Naive thymus-derived CD4-positive, alpha-beta T cell (primary cell): ENCODE measurements at regions of chr9 and their contacts with region 1.

Region 1: DNA sequence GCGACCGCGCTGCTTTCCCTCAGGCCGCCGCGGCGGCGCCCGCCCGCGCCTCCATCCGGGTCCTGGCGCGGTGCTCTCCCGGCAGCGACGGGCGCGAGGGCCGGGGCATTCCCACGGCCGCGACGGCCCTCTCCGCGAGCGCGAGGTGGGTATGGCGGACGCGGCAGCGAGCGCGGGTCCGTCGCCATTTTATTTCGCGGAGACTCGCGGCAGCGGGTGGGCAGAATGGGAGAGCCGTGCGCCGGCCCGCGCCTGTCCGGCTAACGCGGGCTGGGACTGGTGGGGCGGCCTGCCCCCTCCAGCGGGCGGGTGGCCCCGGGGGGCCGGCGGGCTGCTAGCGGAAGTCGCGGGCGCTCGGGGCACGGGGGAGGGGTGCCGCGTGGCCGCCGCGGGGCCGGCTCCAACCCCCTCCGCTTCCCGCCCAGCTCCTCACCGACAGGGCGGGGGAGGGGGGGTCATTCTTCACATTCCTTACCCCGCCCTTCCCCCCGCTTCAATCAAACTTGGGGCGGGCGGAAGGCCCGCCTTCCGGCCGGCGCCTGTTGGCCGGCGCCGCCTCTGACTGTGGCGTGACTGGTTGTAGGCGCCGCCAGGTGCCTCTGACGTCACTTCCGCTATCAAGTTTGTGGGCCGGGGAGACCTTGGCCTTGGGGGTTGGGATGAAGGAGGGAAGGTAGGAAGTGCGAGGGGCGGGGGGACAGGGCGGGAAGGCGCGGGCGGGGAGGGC is 82.1 kb downstream of the PTPDC1 start:
- DNase-seq: peak; percentile 81 to 96 (median 92)
- ATAC-seq: peak; percentile 72
- H3K4me3 ChIP-seq: peak overlapping the region; percentile 82
- H3K4me3 Mint-ChIP-seq: peak overlapping the region; percentile 84 to 96 (median 88)
- H3K27ac ChIP-seq: peak overlapping the region; percentile 100
- H3K27ac Mint-ChIP-seq: peak overlapping the region; percentile 79 to 97 (median 91)
- H3K4me1 ChIP-seq: peaks cover 37 to 38% of the 10 kb centered on the region in 2 donors
- H3K4me1 Mint-ChIP-seq: peaks cover 33 to 61% (median 58%) of the 10 kb centered on the region in 7 donors
- H3K27me3 ChIP-seq: no peaks in the 10 kb centered on the region
- H3K27me3 Mint-ChIP-seq: no peaks in the 10 kb centered on the region

Region 2: DNA sequence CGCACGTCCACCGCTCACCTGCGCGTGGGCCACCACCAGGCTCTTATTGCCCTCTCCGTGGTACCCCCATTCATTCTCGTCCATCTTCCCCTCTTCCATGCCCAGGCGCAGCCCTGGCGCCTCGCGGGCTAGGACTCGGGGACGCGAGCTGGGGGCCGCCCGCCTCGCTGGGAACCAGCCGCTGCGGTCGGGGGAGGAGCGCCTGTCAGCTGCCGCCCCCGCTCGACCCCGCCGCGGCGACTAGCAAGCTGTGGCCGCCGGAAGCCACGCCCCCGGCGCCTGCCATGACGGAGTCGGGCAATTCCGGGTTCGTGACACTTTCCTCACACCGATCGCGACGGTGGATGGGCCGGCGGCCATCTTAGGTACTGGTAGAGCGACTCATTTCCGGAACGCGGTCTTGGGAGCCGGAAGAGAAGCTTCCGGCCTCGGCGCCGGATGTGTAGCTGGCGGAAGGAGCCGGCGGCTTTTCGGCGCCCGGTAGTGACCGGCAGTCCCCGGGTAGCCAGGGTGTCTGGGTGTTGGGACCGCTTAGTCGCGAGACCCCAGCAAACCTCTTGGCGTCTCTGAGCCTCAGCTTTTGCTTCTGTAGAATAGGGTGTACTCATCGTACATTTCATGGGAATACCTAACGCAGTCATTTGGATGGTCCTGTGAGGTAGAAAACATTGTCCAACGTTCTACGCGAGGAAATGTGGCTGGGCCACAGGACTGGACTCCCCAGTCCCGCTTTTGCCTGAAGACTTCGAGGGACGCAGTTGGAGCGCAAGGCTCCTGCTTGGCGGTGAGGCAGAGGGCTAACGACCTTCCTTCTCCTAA is 1496.3 kb before region 1 on chr9 and contains the start of gene IPPK:
- CTCF ChIA-PET with region 1: no interaction called
- POLR2A ChIA-PET with region 1: no interaction called
- intact Hi-C with region 1: loop called (anchors 1 to 10 kb)
- DNase-seq: peak; percentile 92 to 99 (median 96)
- ATAC-seq: peak; percentile 98
- H3K4me3 ChIP-seq: peak within 1 kb of the TSS; percentile 100
- H3K4me3 Mint-ChIP-seq: peak within 1 kb of the TSS; percentile 83 to 98 (median 95)
- H3K27ac ChIP-seq: peak within 1 kb of the TSS; percentile 91
- H3K27ac Mint-ChIP-seq: peak within 1 kb of the TSS; percentile 90 to 98 (median 95)
- H3K4me1 ChIP-seq: peaks cover 16 to 23% of the 10 kb centered on the region in 2 donors
- H3K4me1 Mint-ChIP-seq: peaks cover 27 to 46% (median 36%) of the 10 kb centered on the region in 7 donors
- H3K27me3 ChIP-seq: no peaks in the 10 kb centered on the region
- H3K27me3 Mint-ChIP-seq: no peaks in the 10 kb centered on the region
- total RNA-seq, gene IPPK: 5.9 to 12.8 (median 7.4) TPM

Region 3: GRCh38 chr9:94030318-94031179 is 135.9 kb before region 1 on chr9:
- CTCF ChIA-PET with region 1: no interaction called
- POLR2A ChIA-PET with region 1: no interaction called
- intact Hi-C with region 1: loop called (anchors 1 kb)
- DNase-seq: peak; percentile 65 to 86 (median 75)
- ATAC-seq: peak; percentile 100
- H3K4me3 ChIP-seq: peak overlapping the region; percentile 89
- H3K4me3 Mint-ChIP-seq: peak overlapping the region; percentile 93 to 100 (median 98)
- H3K27ac ChIP-seq: peak overlapping the region; percentile 79
- H3K27ac Mint-ChIP-seq: peak overlapping the region; percentile 81 to 99 (median 94)
- H3K4me1 ChIP-seq: peaks cover 0 to 10% of the 10 kb centered on the region in 2 donors
- H3K4me1 Mint-ChIP-seq: peaks cover 10 to 44% (median 38%) of the 10 kb centered on the region in 7 donors
- H3K27me3 ChIP-seq: peaks cover 0 to 6% of the 10 kb centered on the region in 2 donors
- H3K27me3 Mint-ChIP-seq: peaks cover 0 to 15% (median 6%) of the 10 kb centered on the region in 5 donors

Region 4: GRCh38 chr9:94181408-94182181 is 15.2 kb after region 1 on chr9:
- CTCF ChIA-PET with region 1: no interaction called
- POLR2A ChIA-PET with region 1: interaction called, 3 read pairs
- intact Hi-C with region 1: loop called in 1 of 2 experiments (anchors 2 kb)
- DNase-seq: no peak
- ATAC-seq: peak; percentile 14
- H3K4me3 ChIP-seq: no peak overlapping the region
- H3K4me3 Mint-ChIP-seq: no peak overlapping the region
- H3K27ac ChIP-seq: no peak overlapping the region
- H3K27ac Mint-ChIP-seq: peak overlapping the region in 7 of 9 donors; percentile 36 to 86 (median 58)
- H3K4me1 ChIP-seq: no peaks in the 10 kb centered on the region
- H3K4me1 Mint-ChIP-seq: peaks cover 10 to 54% (median 43%) of the 10 kb centered on the region in 7 donors
- H3K27me3 ChIP-seq: no peaks in the 10 kb centered on the region
- H3K27me3 Mint-ChIP-seq: no peaks in the 10 kb centered on the region

Region 5: DNA sequence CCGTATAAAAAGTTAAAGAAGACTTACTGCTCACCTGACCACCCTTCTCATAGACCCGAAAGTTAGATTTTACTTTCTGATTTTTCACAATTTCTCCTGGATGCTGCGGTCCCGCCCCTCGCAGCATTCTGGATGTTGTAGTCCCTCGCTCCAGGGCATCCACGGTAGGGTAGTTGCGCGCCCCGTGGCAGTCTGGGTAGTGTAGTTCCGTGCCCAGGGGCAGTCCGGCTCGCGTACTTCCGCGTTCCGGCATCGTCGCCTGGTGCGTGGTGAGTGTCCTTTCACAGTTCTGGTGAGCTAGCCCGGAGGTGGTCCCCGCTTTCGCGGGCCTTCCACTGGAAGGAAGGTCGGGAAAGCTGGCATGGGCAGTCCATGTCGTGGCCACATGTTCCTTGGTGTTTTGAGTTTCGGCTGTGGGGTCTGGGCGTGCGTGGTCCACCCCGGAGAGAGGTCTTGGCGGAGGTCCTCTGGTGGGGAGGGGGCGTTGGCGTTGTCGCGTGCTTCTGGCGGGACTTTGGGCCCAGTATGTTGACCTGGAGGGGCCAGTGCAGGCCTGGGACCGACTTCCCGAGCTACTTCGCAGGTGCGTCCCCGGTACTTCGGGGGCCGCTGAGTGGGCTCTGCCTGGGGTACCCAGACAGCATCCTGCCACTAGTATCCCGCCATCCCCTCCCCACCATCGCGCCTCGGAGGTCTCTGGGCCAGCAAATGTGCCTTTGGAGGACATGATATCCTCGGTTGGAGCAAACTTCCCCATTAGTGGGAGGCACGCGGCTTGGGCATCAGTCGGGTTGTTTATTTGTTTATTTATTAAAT is 92.9 kb after region 1 on chr9 and contains the start of gene ZNF169:
- CTCF ChIA-PET with region 1: no interaction called
- POLR2A ChIA-PET with region 1: no interaction called
- intact Hi-C with region 1: loop called (anchors 1 kb)
- DNase-seq: peak; percentile 68 to 84 (median 77)
- ATAC-seq: peak; percentile 100
- H3K4me3 ChIP-seq: peak within 1 kb of the TSS; percentile 99
- H3K4me3 Mint-ChIP-seq: peak within 1 kb of the TSS; percentile 97 to 99 (median 99)
- H3K27ac ChIP-seq: peak within 1 kb of the TSS; percentile 66
- H3K27ac Mint-ChIP-seq: peak within 1 kb of the TSS; percentile 93 to 97 (median 95)
- H3K4me1 ChIP-seq: peaks cover 7% of the 10 kb centered on the region in 2 donors
- H3K4me1 Mint-ChIP-seq: peaks cover 28 to 56% (median 43%) of the 10 kb centered on the region in 7 donors
- H3K27me3 ChIP-seq: no peaks in the 10 kb centered on the region
- H3K27me3 Mint-ChIP-seq: peaks cover 4 to 15% (median 6%) of the 10 kb centered on the region in 5 donors
- total RNA-seq, gene ZNF169: 5.0 to 28.4 (median 12.9) TPM